A673 (cell line): ENCODE measurements at regions of chr11 and their contacts with region 1.

Region 1: GRCh38 chr11:71086675-71087258 is 165.6 kb downstream of the SHANK2 start:
- DNase-seq: peak; percentile 31
- H3K4me3 ChIP-seq: no peak overlapping the region
- H3K27ac ChIP-seq: no peak overlapping the region
- H3K4me1 ChIP-seq: no peaks in the 10 kb centered on the region
- H3K27me3 ChIP-seq: no peaks in the 10 kb centered on the region
- CTCF ChIP-seq: peak; percentile 68

Region 2: GRCh38 chr11:71222318-71223080 is 135.7 kb after region 1 on chr11:
- CTCF ChIA-PET with region 1: no interaction called
- POLR2A ChIA-PET with region 1: no interaction called
- intact Hi-C with region 1: no loop called
- DNase-seq: no peak
- H3K4me3 ChIP-seq: no peak overlapping the region
- H3K27ac ChIP-seq: no peak overlapping the region
- H3K4me1 ChIP-seq: no peaks in the 10 kb centered on the region
- H3K27me3 ChIP-seq: no peaks in the 10 kb centered on the region
- CTCF ChIP-seq: no peak

Region 3: GRCh38 chr11:71336176-71336995 is 249.6 kb after region 1 on chr11:
- CTCF ChIA-PET with region 1: no interaction called
- POLR2A ChIA-PET with region 1: no interaction called
- intact Hi-C with region 1: no loop called
- DNase-seq: no peak
- H3K4me3 ChIP-seq: no peak overlapping the region
- H3K27ac ChIP-seq: no peak overlapping the region
- H3K4me1 ChIP-seq: no peaks in the 10 kb centered on the region
- H3K27me3 ChIP-seq: no peaks in the 10 kb centered on the region
- CTCF ChIP-seq: no peak

Region 4: DNA sequence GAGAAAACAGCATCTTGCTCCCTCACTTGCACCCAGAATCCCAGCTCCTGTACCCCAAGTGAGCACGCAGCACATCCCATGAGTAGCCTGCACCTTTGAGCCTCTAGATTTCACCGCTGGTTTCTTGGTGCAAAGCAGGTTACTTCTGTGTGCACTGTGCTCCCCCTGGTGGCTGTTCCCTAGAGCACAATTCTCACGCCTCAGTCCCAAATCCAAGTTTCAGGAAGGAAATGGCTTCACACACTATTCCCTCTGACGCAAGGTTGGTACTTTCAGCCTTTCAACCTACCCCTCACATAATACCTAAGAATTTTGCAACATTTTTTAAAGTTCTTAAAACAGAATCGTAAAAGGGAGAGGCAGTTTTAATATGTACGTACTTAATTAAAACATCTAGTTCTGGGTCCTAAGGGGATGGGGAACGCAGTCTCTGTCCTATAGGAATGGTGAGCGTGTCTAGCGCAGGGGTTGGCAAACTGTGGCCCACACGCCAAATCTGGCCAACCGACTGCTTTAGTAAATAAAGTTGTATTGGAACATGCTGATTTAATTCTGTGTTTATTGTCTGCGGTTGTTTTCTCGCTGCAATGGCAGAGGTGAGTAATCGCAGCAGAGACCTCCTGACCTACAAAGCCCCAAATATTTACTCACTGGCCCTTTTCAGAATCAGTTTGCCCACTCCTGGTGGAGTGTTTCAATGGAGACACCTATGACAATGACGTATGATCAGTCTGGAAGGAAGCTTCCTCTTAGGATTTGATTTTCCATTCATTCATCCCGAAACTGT is 333.9 kb after region 1 on chr11:
- CTCF ChIA-PET with region 1: interaction called, 3 read pairs
- POLR2A ChIA-PET with region 1: no interaction called
- intact Hi-C with region 1: loop called (anchors 5 kb)
- DNase-seq: peak; percentile 76
- H3K4me3 ChIP-seq: no peak overlapping the region
- H3K27ac ChIP-seq: no peak overlapping the region
- H3K4me1 ChIP-seq: no peaks in the 10 kb centered on the region
- H3K27me3 ChIP-seq: no peaks in the 10 kb centered on the region
- CTCF ChIP-seq: peak; percentile 95